Activated B cell treated with CpG ODN at 0.5 μM for 24 hours (primary cell): ENCODE measurements at regions of chr9 and their contacts with region 1.

Region 1: DNA sequence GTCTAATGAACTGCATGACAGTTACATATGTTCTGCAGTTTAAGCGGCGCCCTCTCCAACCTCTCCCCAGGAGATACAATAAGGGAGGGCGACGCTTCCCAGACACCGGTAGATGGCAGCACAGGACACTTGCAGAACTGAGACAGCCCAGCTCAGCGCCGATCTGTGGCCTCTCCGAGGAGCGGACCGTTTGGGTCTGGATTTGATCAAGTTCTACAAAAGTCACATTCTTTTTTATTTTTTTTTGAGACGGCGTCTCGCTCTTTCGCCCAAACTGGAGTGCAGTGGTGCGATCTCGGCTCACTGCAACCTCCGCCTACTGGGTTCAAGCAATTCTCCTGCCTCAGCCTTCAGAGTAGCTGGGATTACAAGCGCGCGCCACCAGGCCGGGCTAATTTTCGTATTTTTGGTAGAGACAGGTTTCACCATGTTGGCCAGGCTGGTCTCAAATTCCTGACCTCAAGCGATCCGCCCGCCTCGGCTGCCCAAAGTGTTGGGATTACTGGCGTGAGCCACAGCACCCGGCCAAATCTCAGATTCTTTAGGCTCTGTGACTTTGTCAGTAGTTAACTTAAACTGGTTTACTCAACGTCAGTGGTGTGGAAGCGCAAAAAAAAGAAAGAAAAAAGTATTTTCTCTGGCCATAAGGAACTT is 1.4 kb upstream of the ATOSB start:
- DNase-seq: peak; percentile 60
- ATAC-seq: peak; percentile 62
- H3K4me3 Mint-ChIP-seq: peak overlapping the region; percentile 96
- H3K27ac Mint-ChIP-seq: peak overlapping the region; percentile 94
- H3K4me1 Mint-ChIP-seq: peaks cover 43% of the 10 kb centered on the region
- H3K27me3 Mint-ChIP-seq: no peaks in the 10 kb centered on the region
- CTCF ChIP-seq: peak; percentile 71

Region 2: GRCh38 chr9:34899535-34900158 is 217.4 kb before region 1 on chr9:
- CTCF ChIA-PET with region 1: interaction called, 37 read pairs
- POLR2A ChIA-PET with region 1: interaction called, 4 read pairs
- intact Hi-C with region 1: loop called (anchors 1 kb)
- DNase-seq: peak; percentile 66
- ATAC-seq: peak; percentile 99
- H3K4me3 Mint-ChIP-seq: no peak overlapping the region
- H3K27ac Mint-ChIP-seq: no peak overlapping the region
- H3K4me1 Mint-ChIP-seq: no peaks in the 10 kb centered on the region
- H3K27me3 Mint-ChIP-seq: peaks cover 22% of the 10 kb centered on the region
- CTCF ChIP-seq: peak; percentile 22

Region 3: GRCh38 chr9:35079426-35080341 is 37.3 kb before region 1 on chr9 and contains the start of gene FANCG:
- CTCF ChIA-PET with region 1: interaction called, 3 read pairs
- POLR2A ChIA-PET with region 1: interaction called, 24 read pairs
- intact Hi-C with region 1: loop called (anchors 1 kb)
- DNase-seq: peak; percentile 80
- ATAC-seq: peak; percentile 92
- H3K4me3 Mint-ChIP-seq: peak within 1 kb of the TSS; percentile 88
- H3K27ac Mint-ChIP-seq: peak within 1 kb of the TSS; percentile 74
- H3K4me1 Mint-ChIP-seq: peaks cover 22% of the 10 kb centered on the region
- H3K27me3 Mint-ChIP-seq: no peaks in the 10 kb centered on the region
- CTCF ChIP-seq: no peak
- total RNA-seq, gene FANCG: 27.4 and 28.8 TPM in 2 replicates

Region 4: GRCh38 chr9:35161713-35162604 is 44.9 kb after region 1 on chr9 and contains the start of gene UNC13B:
- CTCF ChIA-PET with region 1: interaction called, 4 read pairs
- POLR2A ChIA-PET with region 1: no interaction called
- intact Hi-C with region 1: loop called (anchors 1 kb)
- DNase-seq: peak; percentile 72
- ATAC-seq: peak; percentile 95
- H3K4me3 Mint-ChIP-seq: peak within 1 kb of the TSS; percentile 89
- H3K27ac Mint-ChIP-seq: no peak within 1 kb of the TSS
- H3K4me1 Mint-ChIP-seq: peaks cover 24% of the 10 kb centered on the region
- H3K27me3 Mint-ChIP-seq: peaks cover 8% of the 10 kb centered on the region
- CTCF ChIP-seq: no peak
- total RNA-seq, gene UNC13B: 0.53 and 0.78 TPM in 2 replicates

Region 5: DNA sequence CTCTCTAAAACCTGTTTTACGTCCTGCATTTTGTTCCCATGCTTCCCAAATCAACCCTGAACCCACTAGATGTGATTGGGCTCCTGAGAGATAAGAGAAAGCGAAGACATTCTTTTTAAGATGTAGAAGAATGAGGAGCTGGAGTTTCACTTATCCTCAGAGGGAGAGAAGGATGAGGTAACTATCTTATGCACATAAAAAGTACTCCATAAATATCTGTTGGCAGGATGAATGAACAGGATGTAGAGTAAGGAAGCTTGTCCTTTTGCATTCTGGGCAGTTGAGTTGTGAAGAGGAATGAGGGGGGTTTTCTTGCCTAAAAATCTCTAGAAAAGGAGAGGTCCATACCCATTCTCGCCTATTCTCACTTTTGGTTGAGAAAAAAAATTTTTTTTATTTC is 207.9 kb after region 1 on chr9:
- CTCF ChIA-PET with region 1: no interaction called
- POLR2A ChIA-PET with region 1: no interaction called
- intact Hi-C with region 1: no loop called
- DNase-seq: no peak
- ATAC-seq: no peak
- H3K4me3 Mint-ChIP-seq: no peak overlapping the region
- H3K27ac Mint-ChIP-seq: no peak overlapping the region
- H3K4me1 Mint-ChIP-seq: peaks cover 5% of the 10 kb centered on the region
- H3K27me3 Mint-ChIP-seq: peaks cover 4% of the 10 kb centered on the region
- CTCF ChIP-seq: no peak

Region 6: DNA sequence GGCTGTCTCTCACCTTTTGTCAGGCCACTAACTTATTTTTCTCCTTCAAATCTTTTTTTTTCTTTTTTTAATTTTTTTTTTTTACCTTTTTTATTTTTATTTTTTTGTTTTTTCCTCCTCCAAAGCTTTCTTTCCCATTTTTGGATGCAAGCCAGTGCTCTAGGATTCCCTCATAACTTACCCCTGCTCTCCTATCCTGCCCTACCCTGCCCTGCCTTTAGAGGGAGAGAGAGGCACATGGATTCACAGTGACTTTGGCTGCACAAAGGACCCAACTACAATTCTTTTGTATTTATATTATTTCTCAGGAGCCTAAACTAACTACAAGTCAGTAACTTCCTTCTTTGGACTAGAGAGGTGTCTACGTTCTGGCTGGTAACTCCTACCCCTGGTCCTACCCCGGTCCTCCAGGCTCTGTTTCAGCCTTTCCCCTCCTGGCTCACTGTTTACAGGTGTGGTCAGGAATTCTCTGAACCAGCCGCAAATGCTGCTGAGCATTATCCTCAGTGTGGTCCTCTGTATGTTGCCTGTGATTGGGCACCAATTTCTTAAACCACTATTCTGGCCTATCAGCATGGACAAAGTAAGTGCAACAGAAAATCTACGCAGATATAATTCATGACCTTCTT is 364.4 kb after region 1 on chr9:
- CTCF ChIA-PET with region 1: interaction called, 20 read pairs
- POLR2A ChIA-PET with region 1: no interaction called
- intact Hi-C with region 1: loop called (anchors 1 kb)
- DNase-seq: no peak
- ATAC-seq: peak; percentile 66
- H3K4me3 Mint-ChIP-seq: no peak overlapping the region
- H3K27ac Mint-ChIP-seq: no peak overlapping the region
- H3K4me1 Mint-ChIP-seq: no peaks in the 10 kb centered on the region
- H3K27me3 Mint-ChIP-seq: peaks cover 10% of the 10 kb centered on the region
- CTCF ChIP-seq: no peak

Region 7: GRCh38 chr9:35657546-35658136 is 540.6 kb after region 1 on chr9 and contains the start of gene RMRP:
- CTCF ChIA-PET with region 1: no interaction called
- POLR2A ChIA-PET with region 1: no interaction called
- intact Hi-C with region 1: loop called (anchors 2 kb)
- DNase-seq: peak; percentile 81
- ATAC-seq: peak; percentile 81
- H3K4me3 Mint-ChIP-seq: peak within 1 kb of the TSS; percentile 88
- H3K27ac Mint-ChIP-seq: peak within 1 kb of the TSS; percentile 99
- H3K4me1 Mint-ChIP-seq: peaks cover 78% of the 10 kb centered on the region
- H3K27me3 Mint-ChIP-seq: peaks cover 5% of the 10 kb centered on the region
- CTCF ChIP-seq: no peak
- total RNA-seq, gene RMRP: 8,247 and 9,516 TPM in 2 replicates